Mammary epithelial cell (primary cell): ENCODE measurements at regions of chr2 and their contacts with region 1.

Region 1: DNA sequence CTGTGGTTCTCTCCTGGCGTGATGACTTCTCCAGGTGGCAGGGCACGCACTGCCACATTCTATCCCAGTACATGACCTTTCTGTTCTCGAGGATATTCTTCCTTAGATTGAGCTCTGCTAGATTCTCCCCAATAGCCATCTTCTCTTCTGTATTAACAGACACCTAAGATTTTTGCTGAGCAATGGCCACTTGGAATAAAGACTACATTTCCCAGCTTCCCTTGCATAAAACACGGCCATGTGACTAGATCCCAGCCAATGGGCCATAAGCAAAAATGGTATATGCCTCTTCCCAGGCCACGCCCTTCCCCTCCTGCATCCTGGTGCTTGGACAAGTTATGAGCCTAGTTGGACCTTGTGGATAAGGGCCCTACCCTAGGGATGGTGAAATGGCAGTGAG is 82.1 kb downstream of the EIF2AK3 start:
- DNase-seq: peak; percentile 38
- H3K4me3 ChIP-seq: no peak overlapping the region
- H3K27ac ChIP-seq: no peak overlapping the region
- H3K4me1 ChIP-seq: peaks cover 6% of the 10 kb centered on the region
- H3K27me3 ChIP-seq: no peaks in the 10 kb centered on the region
- CTCF ChIP-seq: no peak

Region 2: DNA sequence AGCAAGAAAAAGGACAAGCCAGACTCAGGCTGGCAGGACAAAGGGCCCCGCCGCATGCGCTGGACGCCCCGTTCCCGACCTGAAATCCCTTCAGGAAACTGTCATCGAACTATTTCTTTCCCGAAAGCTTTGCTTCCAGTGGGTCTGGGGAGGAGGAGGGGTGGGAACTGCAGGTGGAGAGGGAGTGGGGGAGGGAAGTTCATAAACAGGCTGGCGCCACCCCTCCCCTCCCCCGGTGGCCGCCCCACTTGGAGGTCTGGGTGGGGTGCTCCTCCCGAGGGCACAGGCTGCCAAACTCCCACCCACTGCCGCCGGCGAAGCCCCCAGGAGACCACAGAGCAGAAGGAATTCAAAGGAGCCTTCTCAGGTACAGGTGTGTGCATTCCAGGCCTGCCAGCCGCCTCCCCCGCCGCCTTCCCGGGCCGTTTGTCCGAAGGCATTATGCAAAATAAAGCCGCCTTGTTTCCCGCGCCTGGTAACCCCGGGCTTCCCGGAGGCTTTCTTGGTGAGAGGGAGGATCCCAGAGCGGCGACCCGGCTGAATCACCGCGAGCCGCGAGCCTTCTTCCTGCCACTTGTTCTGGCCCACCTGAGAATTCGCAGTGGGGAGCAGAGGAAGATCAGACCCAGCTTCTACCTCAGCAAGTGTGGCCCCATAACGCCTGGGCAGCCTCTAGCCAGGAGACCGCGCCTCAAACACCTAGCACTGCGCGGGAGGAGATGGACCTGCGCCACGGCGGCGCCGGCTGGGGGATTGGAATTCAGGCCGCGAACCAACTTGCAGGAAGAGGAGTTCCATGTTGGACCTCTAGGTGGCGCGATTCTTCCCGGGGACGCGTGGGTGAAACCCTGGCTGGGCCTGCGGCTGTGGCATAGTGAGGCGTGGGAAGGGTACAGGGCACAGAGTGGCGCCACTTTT is 194.5 kb before region 1 on chr2:
- CTCF ChIA-PET with region 1: no interaction called
- dilution Hi-C with region 1: no loop called
- in situ Hi-C with region 1: no loop called
- intact Hi-C with region 1: loop called (anchors 5 kb)
- DNase-seq: peak; percentile 47
- H3K4me3 ChIP-seq: peak overlapping the region; percentile 25 to 48 (median 39)
- H3K27ac ChIP-seq: no peak overlapping the region
- H3K4me1 ChIP-seq: peaks cover 9% of the 10 kb centered on the region
- H3K27me3 ChIP-seq: no peaks in the 10 kb centered on the region
- CTCF ChIP-seq: peak; percentile 78 to 90

Region 3: DNA sequence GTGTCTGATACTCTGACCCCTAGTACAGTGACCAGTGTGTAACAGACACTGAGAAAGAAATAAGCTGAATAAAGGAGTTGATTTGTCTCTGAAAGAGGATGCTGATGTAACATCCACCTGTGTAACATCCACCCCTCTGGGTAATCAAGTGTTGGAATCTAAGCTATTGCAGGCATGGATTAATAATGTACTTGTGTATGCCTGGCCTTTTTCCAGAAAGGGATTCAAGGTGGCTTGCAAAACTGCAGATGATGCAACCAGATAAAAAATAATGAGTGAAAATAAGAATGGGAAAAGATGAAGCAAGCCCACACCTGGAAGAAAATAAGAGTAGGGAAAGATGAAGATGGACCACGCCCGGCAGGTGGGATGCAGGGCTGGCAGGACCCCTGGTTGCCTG is 44.4 kb before region 1 on chr2:
- CTCF ChIA-PET with region 1: no interaction called
- dilution Hi-C with region 1: no loop called
- in situ Hi-C with region 1: no loop called
- intact Hi-C with region 1: loop called (anchors 5 kb)
- DNase-seq: peak; percentile 84
- H3K4me3 ChIP-seq: no peak overlapping the region
- H3K27ac ChIP-seq: peak overlapping the region; percentile 80
- H3K4me1 ChIP-seq: peaks cover 40% of the 10 kb centered on the region
- H3K27me3 ChIP-seq: no peaks in the 10 kb centered on the region
- CTCF ChIP-seq: no peak

Region 4: DNA sequence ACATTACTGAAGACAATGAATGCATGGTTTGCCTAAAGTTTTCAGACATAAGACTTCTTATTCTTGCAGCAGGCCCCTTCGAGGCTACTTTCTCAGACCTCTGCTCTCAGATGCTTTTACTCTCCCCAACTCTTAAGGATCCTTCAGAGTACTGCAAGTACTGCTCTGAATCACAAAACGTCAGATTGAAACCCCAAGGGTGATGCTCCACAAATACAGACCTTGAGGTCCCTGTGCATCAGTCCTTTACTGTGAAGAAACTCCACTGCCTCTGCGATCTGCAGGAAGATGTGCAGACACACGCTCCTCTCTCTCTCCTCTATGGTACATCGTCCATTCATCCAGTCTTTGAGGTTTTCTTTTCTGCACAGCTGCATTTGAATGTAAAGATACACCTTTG is 29.3 kb after region 1 on chr2:
- CTCF ChIA-PET with region 1: no interaction called
- dilution Hi-C with region 1: no loop called
- in situ Hi-C with region 1: no loop called
- intact Hi-C with region 1: no loop called
- DNase-seq: no peak
- H3K4me3 ChIP-seq: no peak overlapping the region
- H3K27ac ChIP-seq: no peak overlapping the region
- H3K4me1 ChIP-seq: no peaks in the 10 kb centered on the region
- H3K27me3 ChIP-seq: no peaks in the 10 kb centered on the region
- CTCF ChIP-seq: no peak